ENCODE measurements at regions of chr6 and their contacts with region 1.

Region 1: GRCh38 chr6:57089687-57090460 is at the start of gene ZNF451:
- DNase-seq: peak; percentile 90 to 98 (median 96)
- ATAC-seq: peak; percentile 89
- H3K4me3 ChIP-seq: peak within 1 kb of the TSS; percentile 59
- H3K4me3 Mint-ChIP-seq: peak within 1 kb of the TSS; percentile 88
- H3K27ac ChIP-seq: peak within 1 kb of the TSS; percentile 41 to 60
- H3K27ac Mint-ChIP-seq: peak within 1 kb of the TSS; percentile 85
- H3K4me1 ChIP-seq: peaks cover 14% of the 10 kb centered on the region
- H3K4me1 Mint-ChIP-seq: peaks cover 36% of the 10 kb centered on the region
- H3K27me3 ChIP-seq: no peaks in the 10 kb centered on the region
- H3K27me3 Mint-ChIP-seq: no peaks in the 10 kb centered on the region
- CTCF ChIP-seq: no peak
- total RNA-seq, gene ZNF451: 124 to 132 TPM

Region 2: DNA sequence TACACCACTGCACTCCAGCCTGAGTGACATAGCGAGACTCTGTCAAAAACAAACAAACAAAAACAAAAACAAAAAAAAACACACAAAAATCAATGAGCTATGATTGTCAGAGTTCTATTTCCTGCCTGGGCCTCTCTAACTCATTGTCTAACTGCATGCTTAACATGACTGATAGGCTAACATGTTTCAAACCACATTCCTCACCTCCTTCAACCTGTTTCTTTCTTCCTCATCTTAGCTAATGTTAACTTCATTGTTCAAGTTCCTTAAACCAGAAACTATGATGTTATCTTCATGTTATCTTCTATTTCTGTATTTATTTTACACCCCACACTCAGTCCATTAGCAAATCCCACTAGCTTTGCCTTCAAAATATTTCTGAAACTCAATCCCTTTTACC is 93.5 kb before region 1 on chr6:
- CTCF ChIA-PET with region 1: no interaction called
- POLR2A ChIA-PET with region 1: no interaction called
- intact Hi-C with region 1: no loop called
- DNase-seq: no peak
- ATAC-seq: no peak
- H3K4me3 ChIP-seq: no peak overlapping the region
- H3K4me3 Mint-ChIP-seq: no peak overlapping the region
- H3K27ac ChIP-seq: no peak overlapping the region
- H3K27ac Mint-ChIP-seq: no peak overlapping the region
- H3K4me1 ChIP-seq: no peaks in the 10 kb centered on the region
- H3K4me1 Mint-ChIP-seq: no peaks in the 10 kb centered on the region
- H3K27me3 ChIP-seq: peaks cover 2 to 6% of the 10 kb centered on the region in 2 experiments
- H3K27me3 Mint-ChIP-seq: peaks cover 30% of the 10 kb centered on the region
- CTCF ChIP-seq: no peak

Region 3: DNA sequence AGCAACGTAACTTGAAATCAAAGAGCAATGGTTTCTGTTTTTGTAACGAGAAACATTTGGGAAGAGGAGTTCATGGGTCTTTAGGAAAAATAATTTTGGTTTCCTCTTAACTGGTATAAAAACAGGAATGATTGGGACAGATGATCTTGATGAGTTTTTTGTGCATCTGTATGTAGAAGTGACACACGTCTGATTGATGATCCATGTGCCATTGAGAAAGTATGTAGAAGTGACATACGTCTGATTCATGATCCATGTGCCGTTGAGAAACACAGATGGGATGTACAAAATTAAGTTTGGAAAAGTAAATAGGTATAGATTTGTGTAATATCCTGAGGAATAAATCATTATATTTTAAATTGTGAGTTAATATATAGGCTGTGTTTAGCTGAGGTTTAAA is 41.3 kb before region 1 on chr6:
- CTCF ChIA-PET with region 1: interaction called, 3 read pairs
- POLR2A ChIA-PET with region 1: interaction called, 5 read pairs
- intact Hi-C with region 1: loop called (anchors 2 to 5 kb)
- DNase-seq: no peak
- ATAC-seq: no peak
- H3K4me3 ChIP-seq: no peak overlapping the region
- H3K4me3 Mint-ChIP-seq: peak overlapping the region; percentile 57
- H3K27ac ChIP-seq: no peak overlapping the region
- H3K27ac Mint-ChIP-seq: peak overlapping the region; percentile 61
- H3K4me1 ChIP-seq: peaks cover 4% of the 10 kb centered on the region
- H3K4me1 Mint-ChIP-seq: peaks cover 34% of the 10 kb centered on the region
- H3K27me3 ChIP-seq: no peaks in the 10 kb centered on the region
- H3K27me3 Mint-ChIP-seq: no peaks in the 10 kb centered on the region
- CTCF ChIP-seq: no peak

Region 4: DNA sequence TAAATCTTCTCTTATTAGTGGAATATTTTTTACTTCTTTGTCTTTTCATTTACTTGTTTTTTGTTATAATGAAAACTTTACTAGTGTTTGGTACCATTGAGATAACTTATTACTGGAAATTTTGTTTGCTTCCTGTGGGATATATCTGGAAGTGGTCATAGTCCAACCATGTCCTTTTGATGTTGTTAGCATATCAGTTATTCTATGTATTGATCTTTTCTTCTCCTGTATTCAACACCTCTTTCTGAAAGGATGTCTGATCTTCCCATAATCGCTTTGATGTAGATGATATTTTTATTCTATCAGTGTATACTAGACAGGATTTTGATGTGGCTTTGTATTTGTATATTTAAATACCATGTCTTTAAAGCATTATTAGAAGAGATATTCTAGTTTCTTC is 17.1 kb after region 1 on chr6:
- CTCF ChIA-PET with region 1: no interaction called
- POLR2A ChIA-PET with region 1: no interaction called
- intact Hi-C with region 1: no loop called
- DNase-seq: no peak
- ATAC-seq: no peak
- H3K4me3 ChIP-seq: no peak overlapping the region
- H3K4me3 Mint-ChIP-seq: no peak overlapping the region
- H3K27ac ChIP-seq: no peak overlapping the region
- H3K27ac Mint-ChIP-seq: no peak overlapping the region
- H3K4me1 ChIP-seq: no peaks in the 10 kb centered on the region
- H3K4me1 Mint-ChIP-seq: peaks cover 82% of the 10 kb centered on the region
- H3K27me3 ChIP-seq: no peaks in the 10 kb centered on the region
- H3K27me3 Mint-ChIP-seq: no peaks in the 10 kb centered on the region
- CTCF ChIP-seq: no peak

Region 5: GRCh38 chr6:57172136-57173055 is 82.5 kb after region 1 on chr6 and contains the start of gene BAG2:
- CTCF ChIA-PET with region 1: no interaction called
- POLR2A ChIA-PET with region 1: interaction called, 3 read pairs
- intact Hi-C with region 1: loop called in 1 of 2 experiments (anchors 2 kb)
- DNase-seq: peak; percentile 71 to 92 (median 82)
- ATAC-seq: peak; percentile 85
- H3K4me3 ChIP-seq: peak within 1 kb of the TSS; percentile 69
- H3K4me3 Mint-ChIP-seq: peak within 1 kb of the TSS; percentile 89
- H3K27ac ChIP-seq: peak within 1 kb of the TSS; percentile 75 to 79
- H3K27ac Mint-ChIP-seq: peak within 1 kb of the TSS; percentile 83
- H3K4me1 ChIP-seq: peaks cover 17% of the 10 kb centered on the region
- H3K4me1 Mint-ChIP-seq: peaks cover 42% of the 10 kb centered on the region
- H3K27me3 ChIP-seq: no peaks in the 10 kb centered on the region
- H3K27me3 Mint-ChIP-seq: no peaks in the 10 kb centered on the region
- CTCF ChIP-seq: no peak
- total RNA-seq, gene BAG2: 5.4 to 5.6 TPM